ENCODE measurements at regions of chr7 and their contacts with region 1.

Region 1: GRCh38 chr7:79524048-79524692 is 70.7 kb upstream of the MAGI2 start:
- DNase-seq: no peak
- H3K4me3 ChIP-seq: no peak overlapping the region
- H3K4me3 Mint-ChIP-seq: no peak overlapping the region
- H3K27ac ChIP-seq: no peak overlapping the region
- H3K27ac Mint-ChIP-seq: no peak overlapping the region
- H3K4me1 ChIP-seq: no peaks in the 10 kb centered on the region
- H3K4me1 Mint-ChIP-seq: no peaks in the 10 kb centered on the region
- H3K27me3 ChIP-seq: no peaks in the 10 kb centered on the region
- H3K27me3 Mint-ChIP-seq: no peaks in the 10 kb centered on the region

Region 2: DNA sequence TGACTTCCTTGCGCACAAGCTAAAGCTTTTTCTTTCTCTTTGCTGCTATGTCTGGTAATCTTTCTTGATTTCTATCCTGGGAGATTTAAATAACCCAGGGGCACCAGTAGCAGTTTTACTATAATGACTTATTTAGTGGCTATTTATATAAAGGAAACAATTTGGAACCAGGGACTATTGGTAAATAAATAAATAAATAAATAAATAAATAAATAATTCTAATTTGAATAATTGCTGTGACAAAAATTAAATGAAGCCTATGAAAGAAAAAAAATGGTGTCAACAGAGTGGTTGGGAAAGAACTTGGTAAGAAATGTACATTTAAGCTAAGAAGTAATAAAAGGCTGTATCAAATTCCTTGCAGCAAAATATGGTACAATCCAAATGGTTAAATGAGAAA is 40.0 kb after region 1 on chr7:
- CTCF ChIA-PET with region 1: no interaction called
- POLR2A ChIA-PET with region 1: no interaction called
- intact Hi-C with region 1: loop called (anchors 1 kb)
- DNase-seq: no peak
- H3K4me3 ChIP-seq: no peak overlapping the region
- H3K4me3 Mint-ChIP-seq: no peak overlapping the region
- H3K27ac ChIP-seq: no peak overlapping the region
- H3K27ac Mint-ChIP-seq: no peak overlapping the region
- H3K4me1 ChIP-seq: no peaks in the 10 kb centered on the region
- H3K4me1 Mint-ChIP-seq: no peaks in the 10 kb centered on the region
- H3K27me3 ChIP-seq: no peaks in the 10 kb centered on the region
- H3K27me3 Mint-ChIP-seq: no peaks in the 10 kb centered on the region

Measured in CD4-positive, alpha-beta memory T cell (primary cell).